H1 (cell line): ENCODE measurements at regions of chr3 and their contacts with region 1.

Region 1: GRCh38 chr3:9302425-9303181 is 53.2 kb upstream of the SRGAP3 start:
- DNase-seq: peak; percentile 79 to 93
- H3K4me3 ChIP-seq: peak overlapping the region in 3 of 4 experiments; percentile 23 to 59 (median 38); a peak in 6 of 8 replicates
- H3K27ac ChIP-seq: no peak overlapping the region
- H3K4me1 ChIP-seq: peaks cover 0 to 5% (median 3%) of the 10 kb centered on the region in 4 experiments; a peak in 5 of 7 replicates
- H3K27me3 ChIP-seq: peaks cover 0 to 2% (median under 1%) of the 10 kb centered on the region in 4 experiments; a peak in 1 of 7 replicates
- CTCF ChIP-seq: peak; percentile 70 to 98 (median 80)
- EP300 ChIP-seq: peak in 1 of 2 experiments; percentile 51; a peak in 1 of 3 replicates
- POLR2A ChIP-seq: no peak
- RAD21 ChIP-seq: peak; percentile 97 to 99

Region 2: DNA sequence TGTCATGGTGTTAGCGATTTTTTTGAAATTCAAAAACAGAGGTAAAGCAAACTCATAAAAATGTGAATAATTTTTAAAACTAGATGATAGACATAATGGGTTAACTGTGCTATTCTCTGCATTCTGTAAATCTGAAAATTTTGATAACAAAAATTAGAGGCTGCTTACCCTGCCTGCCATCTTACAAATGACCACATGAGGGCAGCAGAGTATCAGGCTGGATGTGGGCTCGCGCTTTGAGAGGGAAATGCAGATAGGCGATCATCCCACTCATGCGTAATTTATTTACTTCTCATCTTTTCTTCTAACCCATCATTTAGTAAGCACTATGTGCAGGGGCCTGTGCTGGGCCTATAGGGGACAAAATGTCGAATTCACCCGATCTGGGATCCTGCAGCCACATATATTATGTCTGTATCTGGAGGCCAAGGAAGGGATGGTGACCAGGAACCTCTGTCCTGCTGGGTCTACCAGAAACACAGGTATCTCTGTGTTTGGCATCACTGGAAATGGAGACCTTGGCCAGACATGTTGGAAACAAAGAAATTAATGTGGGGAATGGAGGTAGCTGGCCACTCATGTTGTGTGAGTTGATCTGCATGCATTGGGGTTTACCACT is 331.5 kb before region 1 on chr3:
- CTCF ChIA-PET with region 1: interaction called, 142 read pairs
- POLR2A ChIA-PET with region 1: interaction called, 4 read pairs
- DNase-seq: peak in 1 of 2 experiments; percentile 83
- H3K4me3 ChIP-seq: no peak overlapping the region
- H3K27ac ChIP-seq: no peak overlapping the region
- H3K4me1 ChIP-seq: peaks cover 0 to 6% (median 3%) of the 10 kb centered on the region in 4 experiments; a peak in 4 of 7 replicates
- H3K27me3 ChIP-seq: peaks cover 0 to 2% (median 0%) of the 10 kb centered on the region in 4 experiments; a peak in 1 of 7 replicates
- CTCF ChIP-seq: peak; percentile 72 to 87 (median 83)
- EP300 ChIP-seq: no peak
- POLR2A ChIP-seq: no peak
- RAD21 ChIP-seq: peak; percentile 98

Region 3: DNA sequence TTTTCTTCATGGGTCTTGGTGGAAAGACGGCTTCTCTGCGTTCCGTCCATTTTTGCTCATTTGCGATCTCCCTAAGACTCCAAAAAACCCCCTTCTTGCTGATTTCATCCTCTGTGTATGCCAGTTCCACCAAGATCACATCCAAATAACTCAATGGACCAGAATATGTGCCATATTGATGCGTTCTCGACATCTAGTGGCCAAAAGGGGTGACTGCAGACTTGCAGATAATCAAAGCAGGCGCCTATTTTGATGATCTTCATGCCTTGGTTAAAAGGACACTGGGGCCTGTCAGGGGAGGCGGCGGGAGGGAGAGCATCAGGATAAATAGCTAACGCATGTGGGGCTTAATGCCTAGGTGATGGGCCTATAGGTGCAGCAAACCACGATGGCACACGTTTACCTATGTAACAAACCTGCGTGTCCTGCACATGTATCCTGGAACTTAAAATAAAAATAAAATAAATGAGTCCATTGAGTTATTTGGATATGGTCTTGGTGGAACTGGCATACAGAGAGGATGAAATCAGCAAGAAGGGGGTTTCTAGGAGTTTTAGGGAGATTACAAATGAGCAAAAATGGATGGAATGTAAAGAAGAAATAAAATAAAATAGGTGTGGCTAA is 235.1 kb before region 1 on chr3:
- CTCF ChIA-PET with region 1: interaction called, 23 read pairs
- POLR2A ChIA-PET with region 1: no interaction called
- DNase-seq: peak; percentile 31 to 65
- H3K4me3 ChIP-seq: no peak overlapping the region
- H3K27ac ChIP-seq: no peak overlapping the region
- H3K4me1 ChIP-seq: no peaks in the 10 kb centered on the region
- H3K27me3 ChIP-seq: no peaks in the 10 kb centered on the region
- CTCF ChIP-seq: peak; percentile 32 to 96 (median 94)
- EP300 ChIP-seq: no peak
- POLR2A ChIP-seq: no peak
- RAD21 ChIP-seq: peak; percentile 97

Region 4: GRCh38 chr3:9117220-9117619 is 185.4 kb before region 1 on chr3:
- CTCF ChIA-PET with region 1: interaction called, 31 read pairs
- POLR2A ChIA-PET with region 1: no interaction called
- DNase-seq: no peak
- H3K4me3 ChIP-seq: no peak overlapping the region
- H3K27ac ChIP-seq: no peak overlapping the region
- H3K4me1 ChIP-seq: no peaks in the 10 kb centered on the region; a peak in 1 of 7 replicates
- H3K27me3 ChIP-seq: no peaks in the 10 kb centered on the region; a peak in 1 of 7 replicates
- CTCF ChIP-seq: no peak
- EP300 ChIP-seq: no peak
- POLR2A ChIP-seq: no peak
- RAD21 ChIP-seq: no peak

Region 5: GRCh38 chr3:9249273-9250192 is 53.1 kb before region 1 on chr3 and contains the start of gene SRGAP3:
- CTCF ChIA-PET with region 1: interaction called, 32 read pairs
- POLR2A ChIA-PET with region 1: no interaction called
- DNase-seq: peak; percentile 54 to 87
- H3K4me3 ChIP-seq: peak within 1 kb of the TSS; percentile 59 to 74 (median 72)
- H3K27ac ChIP-seq: no peak within 1 kb of the TSS
- H3K4me1 ChIP-seq: peaks cover 7 to 23% (median 16%) of the 10 kb centered on the region in 4 experiments
- H3K27me3 ChIP-seq: no peaks in the 10 kb centered on the region; a peak in 1 of 7 replicates
- CTCF ChIP-seq: peak in 2 of 3 experiments; percentile 34 to 45; a peak in 2 of 4 replicates
- EP300 ChIP-seq: no peak
- POLR2A ChIP-seq: peak in 1 of 2 experiments; percentile 54; a peak in 2 of 3 replicates
- RAD21 ChIP-seq: peak; percentile 36 to 46
- total RNA-seq, gene SRGAP3: 9.4 and 11.4 TPM in 2 replicates

Region 6: GRCh38 chr3:9266716-9267115 is 35.9 kb before region 1 on chr3:
- CTCF ChIA-PET with region 1: no interaction called
- POLR2A ChIA-PET with region 1: no interaction called
- DNase-seq: no peak
- H3K4me3 ChIP-seq: no peak overlapping the region
- H3K27ac ChIP-seq: no peak overlapping the region
- H3K4me1 ChIP-seq: no peaks in the 10 kb centered on the region
- H3K27me3 ChIP-seq: no peaks in the 10 kb centered on the region
- CTCF ChIP-seq: no peak
- EP300 ChIP-seq: no peak
- POLR2A ChIP-seq: no peak
- RAD21 ChIP-seq: no peak

Region 7: GRCh38 chr3:9316881-9317361 is 14.3 kb after region 1 on chr3:
- CTCF ChIA-PET with region 1: interaction called, 45 read pairs
- POLR2A ChIA-PET with region 1: no interaction called
- DNase-seq: peak in 1 of 2 experiments; percentile 51
- H3K4me3 ChIP-seq: peak overlapping the region in 1 of 4 experiments; percentile 34; a peak in 2 of 8 replicates
- H3K27ac ChIP-seq: 0 out of 2 replicates have a peak overlapping the region, but pooled peaks have one; percentile 39
- H3K4me1 ChIP-seq: peaks cover 0 to 7% (median 5%) of the 10 kb centered on the region in 4 experiments; a peak in 5 of 7 replicates
- H3K27me3 ChIP-seq: no peaks in the 10 kb centered on the region; a peak in 1 of 7 replicates
- CTCF ChIP-seq: no peak
- EP300 ChIP-seq: no peak
- POLR2A ChIP-seq: peak in 1 of 2 experiments; percentile 38; a peak in 2 of 3 replicates
- RAD21 ChIP-seq: no peak

Region 8: GRCh38 chr3:9352917-9353752 is 50.5 kb after region 1 on chr3:
- CTCF ChIA-PET with region 1: interaction called, 20 read pairs
- POLR2A ChIA-PET with region 1: no interaction called
- DNase-seq: peak; percentile 34 to 74
- H3K4me3 ChIP-seq: no peak overlapping the region
- H3K27ac ChIP-seq: peak overlapping the region; percentile 76
- H3K4me1 ChIP-seq: peaks cover 10 to 30% (median 16%) of the 10 kb centered on the region in 4 experiments
- H3K27me3 ChIP-seq: no peaks in the 10 kb centered on the region
- CTCF ChIP-seq: peak; percentile 56 to 90 (median 80)
- EP300 ChIP-seq: no peak
- POLR2A ChIP-seq: no peak
- RAD21 ChIP-seq: peak; percentile 86 to 88

Region 9: GRCh38 chr3:9377981-9378380 is 75.4 kb after region 1 on chr3:
- CTCF ChIA-PET with region 1: no interaction called
- POLR2A ChIA-PET with region 1: no interaction called
- DNase-seq: no peak
- H3K4me3 ChIP-seq: no peak overlapping the region
- H3K27ac ChIP-seq: no peak overlapping the region
- H3K4me1 ChIP-seq: no peaks in the 10 kb centered on the region
- H3K27me3 ChIP-seq: no peaks in the 10 kb centered on the region
- CTCF ChIP-seq: no peak
- EP300 ChIP-seq: no peak
- POLR2A ChIP-seq: no peak
- RAD21 ChIP-seq: no peak